HCT116 (cell line): ENCODE measurements at regions of chr9 and their contacts with region 1.

Region 1: GRCh38 chr9:34591248-34591916 is 1.9 kb upstream of the CNTFR start:
- DNase-seq: peak; percentile 33
- ATAC-seq: peak; percentile 98
- H3K4me3 ChIP-seq: no peak overlapping the region
- H3K27ac ChIP-seq: no peak overlapping the region
- H3K4me1 ChIP-seq: peaks cover 0 to 8% of the 10 kb centered on the region in 2 experiments; a peak in 2 of 4 replicates
- H3K27me3 ChIP-seq: peaks cover 7% of the 10 kb centered on the region; the same call in 1 of the 2 replicates
- CTCF ChIP-seq: peak; percentile 81 to 92 (median 90)
- POLR2A ChIP-seq: no peak
- RAD21 ChIP-seq: peak; percentile 93

Region 2: GRCh38 chr9:34437006-34437925 is 154.1 kb before region 1 on chr9:
- CTCF ChIA-PET with region 1: interaction called, 7 read pairs
- POLR2A ChIA-PET with region 1: no interaction called
- RAD21 ChIA-PET with region 1: interaction called in 1 of 2 experiments, 3 read pairs
- intact Hi-C with region 1: loop called (anchors 1 kb)
- DNase-seq: peak; percentile 67
- ATAC-seq: peak; percentile 96
- H3K4me3 ChIP-seq: no peak overlapping the region
- H3K27ac ChIP-seq: no peak overlapping the region
- H3K4me1 ChIP-seq: no peaks in the 10 kb centered on the region; a peak in 1 of 4 replicates
- H3K27me3 ChIP-seq: no peaks in the 10 kb centered on the region
- CTCF ChIP-seq: peak; percentile 75 to 90 (median 82)
- POLR2A ChIP-seq: no peak
- RAD21 ChIP-seq: peak; percentile 93

Region 3: DNA sequence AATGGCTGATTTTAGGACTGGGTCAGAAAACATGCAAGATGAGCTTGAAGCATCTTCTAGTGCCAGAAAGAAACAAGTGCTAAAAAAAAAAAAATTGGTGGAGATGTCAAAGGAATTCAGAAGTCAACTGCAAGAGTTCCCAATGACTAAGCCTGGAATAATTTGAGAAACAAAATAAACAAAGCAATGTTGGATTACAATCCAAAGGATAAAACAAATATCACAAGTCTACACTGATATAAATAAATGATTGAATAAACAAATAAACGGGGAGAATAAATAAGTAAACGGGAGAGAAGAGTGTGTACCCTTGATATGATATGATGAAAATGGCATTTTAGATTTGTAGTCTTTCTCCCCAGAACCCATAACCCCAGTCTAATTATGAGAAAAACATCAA is 182.0 kb after region 1 on chr9:
- CTCF ChIA-PET with region 1: no interaction called
- POLR2A ChIA-PET with region 1: no interaction called
- RAD21 ChIA-PET with region 1: no interaction called
- intact Hi-C with region 1: no loop called
- DNase-seq: no peak
- ATAC-seq: no peak
- H3K4me3 ChIP-seq: no peak overlapping the region
- H3K27ac ChIP-seq: no peak overlapping the region
- H3K4me1 ChIP-seq: no peaks in the 10 kb centered on the region
- H3K27me3 ChIP-seq: no peaks in the 10 kb centered on the region; the same call in 1 of the 2 replicates
- CTCF ChIP-seq: no peak
- POLR2A ChIP-seq: no peak
- RAD21 ChIP-seq: no peak